ENCODE measurements at regions of chr5 and their contacts with region 1.

Region 1: GRCh38 chr5:173144200-173145176 is at the start of gene BNIP1:
- DNase-seq: peak; percentile 95
- CTCF ChIP-seq: peak; percentile 99

Region 2: GRCh38 chr5:172984243-172984953 is 160.1 kb before region 1 on chr5:
- in situ Hi-C with region 1: loop called (anchors 10 kb)
- DNase-seq: peak; percentile 82
- CTCF ChIP-seq: peak; percentile 37

Measured in GM13976 (cell line).